IMR-90 (cell line): ENCODE measurements at regions of chrX and their contacts with region 1.

Region 1: GRCh38 chrX:141278302-141278701 is 36.0 kb upstream of the SPANXC start:
- DNase-seq: peak; percentile 6
- ATAC-seq: peak; percentile 54
- H3K4me3 ChIP-seq: no peak overlapping the region
- H3K27ac ChIP-seq: no peak overlapping the region
- H3K4me1 ChIP-seq: no peaks in the 10 kb centered on the region
- H3K27me3 ChIP-seq: no peaks in the 10 kb centered on the region
- CTCF ChIP-seq: peak; percentile 56
- POLR2A ChIP-seq: no peak
- RAD21 ChIP-seq: peak; percentile 54

Region 2: GRCh38 chrX:140949233-140949632 is 329.1 kb before region 1 on chrX:
- CTCF ChIA-PET with region 1: no interaction called
- POLR2A ChIA-PET with region 1: no interaction called
- dilution Hi-C with region 1: no loop called
- in situ Hi-C with region 1: no loop called
- intact Hi-C with region 1: no loop called
- DNase-seq: no peak
- ATAC-seq: no peak
- H3K4me3 ChIP-seq: no peak overlapping the region
- H3K27ac ChIP-seq: no peak overlapping the region
- H3K4me1 ChIP-seq: no peaks in the 10 kb centered on the region
- H3K27me3 ChIP-seq: no peaks in the 10 kb centered on the region
- CTCF ChIP-seq: no peak
- POLR2A ChIP-seq: no peak
- RAD21 ChIP-seq: no peak

Region 3: DNA sequence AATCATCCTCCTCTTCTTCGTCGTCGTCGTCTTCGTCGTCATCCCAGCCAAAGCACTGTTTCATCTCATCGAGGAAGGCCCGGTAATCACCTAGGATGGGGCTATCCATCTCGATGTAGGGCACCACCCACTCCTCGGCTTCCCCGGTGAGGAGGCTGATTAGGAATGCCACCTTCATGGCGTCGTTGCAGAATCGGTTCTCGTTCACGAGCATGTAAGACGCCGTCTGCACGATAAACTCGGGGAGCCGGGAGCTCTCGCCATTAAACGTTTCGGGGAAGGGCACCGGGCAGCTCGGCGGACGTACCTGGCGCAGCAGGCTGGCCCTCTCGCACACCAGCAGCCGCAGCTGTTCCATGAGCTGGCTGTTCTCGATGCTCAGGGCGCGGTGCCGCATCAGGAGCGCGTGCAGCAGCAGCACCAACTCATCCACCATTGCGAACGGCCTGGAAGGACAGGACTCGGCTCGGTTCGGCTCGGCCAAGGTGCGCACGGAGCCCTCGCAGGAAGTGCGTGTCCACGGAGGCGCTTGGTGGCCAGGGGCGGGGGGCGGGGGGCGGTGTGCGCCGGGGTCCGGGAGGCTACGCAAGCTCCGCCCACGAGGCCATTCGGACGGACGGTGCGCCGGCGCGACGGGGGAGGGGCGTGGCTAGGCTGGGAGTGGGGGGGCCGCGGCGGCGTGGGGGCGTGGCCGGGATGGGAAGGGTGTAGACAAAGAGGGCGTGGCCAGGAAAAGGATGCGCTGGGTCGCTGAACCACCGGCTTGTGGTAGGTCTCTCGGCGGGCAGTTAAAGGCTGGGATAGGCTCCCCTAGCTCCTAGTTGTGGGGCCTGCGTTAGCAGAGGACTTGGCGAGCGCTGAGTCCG is 101.5 kb before region 1 on chrX and contains the start of gene LDOC1:
- CTCF ChIA-PET with region 1: no interaction called
- POLR2A ChIA-PET with region 1: no interaction called
- dilution Hi-C with region 1: no loop called
- in situ Hi-C with region 1: no loop called
- intact Hi-C with region 1: loop called (anchors 5 kb)
- DNase-seq: peak; percentile 71
- ATAC-seq: peak; percentile 98
- H3K4me3 ChIP-seq: peak within 1 kb of the TSS; percentile 99
- H3K27ac ChIP-seq: peak within 1 kb of the TSS; percentile 85
- H3K4me1 ChIP-seq: peaks cover 4% of the 10 kb centered on the region; the same call in 1 of the 2 replicates
- H3K27me3 ChIP-seq: no peaks in the 10 kb centered on the region
- CTCF ChIP-seq: no peak
- POLR2A ChIP-seq: no peak
- RAD21 ChIP-seq: no peak
- total RNA-seq, gene LDOC1: 5.4 and 7.2 TPM in 2 replicates

Region 4: GRCh38 chrX:141258080-141258479 is 20.2 kb before region 1 on chrX:
- CTCF ChIA-PET with region 1: no interaction called
- POLR2A ChIA-PET with region 1: no interaction called
- dilution Hi-C with region 1: no loop called
- in situ Hi-C with region 1: no loop called
- intact Hi-C with region 1: no loop called
- DNase-seq: no peak
- ATAC-seq: no peak
- H3K4me3 ChIP-seq: no peak overlapping the region
- H3K27ac ChIP-seq: no peak overlapping the region
- H3K4me1 ChIP-seq: no peaks in the 10 kb centered on the region
- H3K27me3 ChIP-seq: no peaks in the 10 kb centered on the region
- CTCF ChIP-seq: no peak
- POLR2A ChIP-seq: no peak
- RAD21 ChIP-seq: no peak